Natural killer cell (primary cell): ENCODE measurements at regions of chr2 and their contacts with region 1.

Region 1: GRCh38 chr2:237072067-237072931 is 13.4 kb upstream of the COPS8 start:
- DNase-seq: peak; percentile 73 to 79
- ATAC-seq: peak; percentile 58 to 78 (median 71)
- H3K4me3 ChIP-seq: no peak overlapping the region
- H3K4me3 Mint-ChIP-seq: no peak overlapping the region
- H3K27ac ChIP-seq: no peak overlapping the region
- H3K27ac Mint-ChIP-seq: no peak overlapping the region
- H3K4me1 ChIP-seq: no peaks in the 10 kb centered on the region
- H3K4me1 Mint-ChIP-seq: no peaks in the 10 kb centered on the region
- H3K27me3 ChIP-seq: no peaks in the 10 kb centered on the region
- H3K27me3 Mint-ChIP-seq: no peaks in the 10 kb centered on the region
- CTCF ChIP-seq: peak; percentile 99

Region 2: DNA sequence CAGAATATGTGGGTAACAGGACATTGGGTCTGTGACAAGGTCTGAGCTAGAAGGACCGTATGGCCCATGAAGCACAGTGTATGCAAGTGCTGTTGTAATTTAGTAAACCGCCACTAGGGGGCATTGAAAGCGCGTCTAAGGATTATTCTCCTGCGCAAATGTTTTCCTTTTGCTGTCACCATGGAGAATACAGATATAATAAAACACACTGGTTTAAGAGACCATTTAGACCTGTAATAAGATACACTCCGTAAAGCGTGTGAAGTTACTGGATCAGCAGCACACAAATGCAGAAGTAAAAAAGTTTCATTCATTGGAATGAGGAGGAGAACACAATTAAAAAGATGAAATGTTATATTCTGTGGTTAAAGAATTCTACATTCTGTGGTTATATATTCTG is 1306.0 kb before region 1 on chr2:
- intact Hi-C with region 1: loop called (anchors 5 kb)
- DNase-seq: peak in 1 of 2 donors; percentile 72
- ATAC-seq: peak; percentile 49 to 86 (median 62)
- H3K4me3 ChIP-seq: no peak overlapping the region
- H3K4me3 Mint-ChIP-seq: no peak overlapping the region
- H3K27ac ChIP-seq: no peak overlapping the region
- H3K27ac Mint-ChIP-seq: no peak overlapping the region
- H3K4me1 ChIP-seq: no peaks in the 10 kb centered on the region
- H3K4me1 Mint-ChIP-seq: peaks cover 4 to 5% of the 10 kb centered on the region in 2 donors
- H3K27me3 ChIP-seq: no peaks in the 10 kb centered on the region
- H3K27me3 Mint-ChIP-seq: no peaks in the 10 kb centered on the region
- CTCF ChIP-seq: peak; percentile 97

Region 3: DNA sequence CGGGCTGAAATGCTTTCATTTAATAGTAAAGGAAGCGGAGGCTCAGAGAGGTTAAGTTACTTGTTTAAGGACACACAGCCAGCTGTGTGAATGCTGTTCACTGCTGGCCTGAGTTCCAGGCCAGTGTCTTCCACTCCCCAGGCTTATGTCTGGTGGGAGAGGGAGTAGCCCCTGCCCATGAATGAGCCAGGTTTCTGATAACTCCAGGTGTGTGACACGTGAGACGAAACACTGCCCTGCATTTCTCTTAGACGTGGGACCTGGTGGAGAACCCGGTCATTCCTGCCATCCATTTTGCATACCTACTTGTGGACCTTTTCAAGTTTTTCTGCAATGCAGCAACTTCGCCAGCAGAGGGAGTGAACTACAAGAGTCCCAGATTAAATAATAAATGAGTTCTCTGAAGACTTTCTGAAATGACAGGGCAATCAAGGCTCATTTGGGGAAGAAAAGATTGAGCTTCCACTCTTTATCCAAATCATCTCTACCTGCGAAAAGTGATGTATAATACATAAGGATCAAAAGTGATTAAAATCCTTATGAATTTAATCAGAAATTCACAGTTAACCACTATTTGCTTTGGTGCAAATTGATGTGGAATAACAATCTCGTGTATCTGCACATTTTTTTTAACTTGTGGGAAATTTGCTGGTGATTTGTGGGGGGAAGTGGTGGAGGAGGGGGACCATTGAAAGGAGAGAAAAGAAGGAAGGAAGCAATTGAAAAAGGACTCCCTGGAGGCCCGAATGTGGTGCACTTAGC is 728.7 kb before region 1 on chr2:
- intact Hi-C with region 1: loop called (anchors 2 kb)
- DNase-seq: peak in 1 of 2 donors; percentile 76
- ATAC-seq: peak in 2 of 3 donors; percentile 57 to 61
- H3K4me3 ChIP-seq: no peak overlapping the region
- H3K4me3 Mint-ChIP-seq: no peak overlapping the region
- H3K27ac ChIP-seq: no peak overlapping the region
- H3K27ac Mint-ChIP-seq: no peak overlapping the region
- H3K4me1 ChIP-seq: no peaks in the 10 kb centered on the region
- H3K4me1 Mint-ChIP-seq: no peaks in the 10 kb centered on the region
- H3K27me3 ChIP-seq: no peaks in the 10 kb centered on the region
- H3K27me3 Mint-ChIP-seq: peaks cover 10 to 18% of the 10 kb centered on the region in 2 donors
- CTCF ChIP-seq: peak; percentile 72

Region 4: GRCh38 chr2:236352761-236353593 is 719.3 kb before region 1 on chr2:
- intact Hi-C with region 1: loop called (anchors 1 kb)
- DNase-seq: peak in 1 of 2 donors; percentile 70
- ATAC-seq: peak in 2 of 3 donors; percentile 63 to 64
- H3K4me3 ChIP-seq: no peak overlapping the region
- H3K4me3 Mint-ChIP-seq: no peak overlapping the region
- H3K27ac ChIP-seq: no peak overlapping the region
- H3K27ac Mint-ChIP-seq: no peak overlapping the region
- H3K4me1 ChIP-seq: no peaks in the 10 kb centered on the region
- H3K4me1 Mint-ChIP-seq: peaks cover 6 to 7% of the 10 kb centered on the region in 2 donors
- H3K27me3 ChIP-seq: peaks cover 2% of the 10 kb centered on the region
- H3K27me3 Mint-ChIP-seq: peaks cover 13 to 21% of the 10 kb centered on the region in 2 donors
- CTCF ChIP-seq: peak; percentile 92

Region 5: GRCh38 chr2:237141556-237141955 is 69.3 kb after region 1 on chr2:
- intact Hi-C with region 1: no loop called
- DNase-seq: no peak
- ATAC-seq: no peak
- H3K4me3 ChIP-seq: no peak overlapping the region
- H3K4me3 Mint-ChIP-seq: no peak overlapping the region
- H3K27ac ChIP-seq: no peak overlapping the region
- H3K27ac Mint-ChIP-seq: no peak overlapping the region
- H3K4me1 ChIP-seq: no peaks in the 10 kb centered on the region
- H3K4me1 Mint-ChIP-seq: no peaks in the 10 kb centered on the region
- H3K27me3 ChIP-seq: no peaks in the 10 kb centered on the region
- H3K27me3 Mint-ChIP-seq: peaks cover 0 to 7% of the 10 kb centered on the region in 2 donors
- CTCF ChIP-seq: no peak